ENCODE measurements at regions of chr3 and their contacts with region 1.

Region 1: GRCh38 chr3:195226900-195227447 is 44.0 kb downstream of the XXYLT1 start:
- DNase-seq: no peak
- H3K4me3 ChIP-seq: no peak overlapping the region
- CTCF ChIP-seq: peak; percentile 51

Region 2: DNA sequence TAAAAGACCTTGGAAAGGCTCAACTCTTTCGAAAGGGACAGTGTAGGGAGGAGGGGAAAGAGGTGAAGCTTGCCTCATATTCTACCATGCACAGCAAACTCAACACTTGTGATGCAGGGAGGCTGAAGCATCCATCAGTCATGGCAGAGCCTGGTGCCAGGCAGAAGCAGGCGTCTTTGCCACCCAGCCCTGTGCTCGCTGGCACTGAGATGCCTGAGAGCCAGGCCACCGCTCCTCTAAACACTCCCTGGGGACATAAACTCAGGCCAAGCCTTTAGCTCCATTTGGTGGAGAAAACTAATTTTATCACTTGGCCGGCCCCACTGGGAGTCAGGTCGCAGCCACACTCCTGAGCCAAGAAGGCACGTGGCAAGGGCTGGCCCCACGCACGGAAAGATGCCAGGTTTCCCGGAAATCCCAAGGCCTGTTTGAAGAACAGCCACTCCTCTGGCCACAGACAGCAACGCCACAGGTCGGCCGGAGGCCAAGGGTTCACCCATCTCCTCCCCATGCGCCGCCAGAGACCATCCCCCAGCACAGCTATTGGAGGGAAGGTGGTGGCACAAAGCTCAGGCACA is 13.3 kb after region 1 on chr3:
- CTCF ChIA-PET with region 1: interaction called, 10 read pairs
- POLR2A ChIA-PET with region 1: no interaction called
- DNase-seq: no peak
- H3K4me3 ChIP-seq: no peak overlapping the region
- CTCF ChIP-seq: no peak

Region 3: DNA sequence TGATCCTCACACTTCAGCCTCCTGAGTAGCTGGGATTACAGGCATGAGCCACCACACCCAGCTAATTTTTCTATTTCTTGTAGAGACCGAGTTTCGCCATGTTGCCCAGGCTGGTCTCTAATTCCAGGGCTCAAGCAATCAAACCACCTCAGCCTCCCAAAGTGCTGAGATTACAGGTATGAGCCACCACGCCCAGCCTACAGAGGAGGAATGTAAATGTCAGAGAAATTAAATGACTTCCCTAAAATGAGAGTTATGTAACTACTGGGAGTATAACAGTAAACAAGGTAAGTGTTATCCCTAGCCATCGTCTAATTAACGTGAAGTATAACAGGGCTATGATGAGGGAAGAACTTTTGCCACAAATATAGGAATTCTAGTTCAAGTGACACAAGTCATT is 150.3 kb after region 1 on chr3:
- CTCF ChIA-PET with region 1: no interaction called
- POLR2A ChIA-PET with region 1: no interaction called
- DNase-seq: no peak
- H3K4me3 ChIP-seq: no peak overlapping the region
- CTCF ChIP-seq: no peak

Measured in AG04449 (cell line).